H1 (cell line): ENCODE measurements at regions of chr4 and their contacts with region 1.

Region 1: GRCh38 chr4:42578187-42578586 is 78.7 kb downstream of the ATP8A1 start:
- DNase-seq: no peak
- H3K4me3 ChIP-seq: no peak overlapping the region
- H3K27ac ChIP-seq: no peak overlapping the region
- H3K4me1 ChIP-seq: no peaks in the 10 kb centered on the region
- H3K27me3 ChIP-seq: no peaks in the 10 kb centered on the region
- CTCF ChIP-seq: peak in 1 of 3 experiments; percentile 44; a peak in 2 of 4 replicates
- EP300 ChIP-seq: no peak
- POLR2A ChIP-seq: no peak
- RAD21 ChIP-seq: no peak; a peak in 1 of 4 replicates

Region 2: GRCh38 chr4:42560467-42560861 is 17.7 kb before region 1 on chr4:
- CTCF ChIA-PET with region 1: no interaction called
- POLR2A ChIA-PET with region 1: no interaction called
- DNase-seq: no peak
- H3K4me3 ChIP-seq: no peak overlapping the region
- H3K27ac ChIP-seq: no peak overlapping the region
- H3K4me1 ChIP-seq: no peaks in the 10 kb centered on the region
- H3K27me3 ChIP-seq: no peaks in the 10 kb centered on the region
- CTCF ChIP-seq: no peak
- EP300 ChIP-seq: no peak
- POLR2A ChIP-seq: no peak
- RAD21 ChIP-seq: no peak

Region 3: GRCh38 chr4:42588909-42589308 is 10.7 kb after region 1 on chr4:
- CTCF ChIA-PET with region 1: interaction called, 18 read pairs
- POLR2A ChIA-PET with region 1: no interaction called
- DNase-seq: no peak
- H3K4me3 ChIP-seq: no peak overlapping the region
- H3K27ac ChIP-seq: no peak overlapping the region
- H3K4me1 ChIP-seq: no peaks in the 10 kb centered on the region
- H3K27me3 ChIP-seq: no peaks in the 10 kb centered on the region
- CTCF ChIP-seq: no peak
- EP300 ChIP-seq: no peak
- POLR2A ChIP-seq: no peak
- RAD21 ChIP-seq: no peak